Breast epithelium (tissue), 4 donors: ENCODE measurements at regions of chr7 and their contacts with region 1.

Region 1: DNA sequence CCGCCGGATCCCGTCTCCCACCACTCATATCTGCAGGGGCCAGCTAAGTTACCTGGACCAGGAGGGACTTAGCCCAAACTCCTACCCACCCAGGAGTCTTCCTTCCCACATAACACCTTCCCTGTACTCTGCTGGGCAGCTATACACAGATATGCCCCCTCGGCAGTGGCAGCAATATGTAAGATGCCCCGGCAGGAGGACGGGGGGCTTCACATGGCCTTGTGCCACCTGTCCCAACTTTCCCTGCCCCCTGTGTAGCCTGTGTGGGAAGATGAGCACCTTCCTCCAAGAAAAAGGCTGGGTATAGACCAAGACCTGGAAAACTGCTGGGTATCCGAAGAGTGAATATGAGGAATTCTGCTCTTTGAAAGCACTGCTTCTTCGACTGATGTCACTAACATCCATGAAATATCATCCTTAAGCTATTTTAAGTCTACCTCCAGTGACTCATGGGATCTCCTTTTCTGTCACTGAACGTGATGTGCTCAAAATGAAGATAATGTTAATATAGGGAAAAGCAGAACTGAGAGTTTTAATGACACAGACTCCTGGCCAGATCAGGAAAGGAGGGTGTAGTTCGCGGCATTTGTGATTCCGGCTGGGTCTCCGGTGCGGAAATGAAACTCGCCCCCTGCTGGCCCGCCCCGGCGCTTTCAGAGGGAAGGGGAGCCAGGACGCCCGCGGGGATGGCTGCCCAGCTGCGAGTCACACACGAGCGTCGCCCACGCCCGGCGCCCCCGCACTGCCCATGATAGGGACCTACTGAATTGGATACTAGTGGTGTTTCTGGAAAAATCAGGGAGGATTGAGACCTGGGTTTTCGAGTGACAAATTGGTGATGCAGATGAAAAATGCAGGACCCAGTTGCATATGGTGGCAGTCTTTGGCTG is 256.9 kb upstream of the NFE2L3 start:
- DNase-seq: peak; percentile 30 to 79
- H3K4me3 ChIP-seq: peak overlapping the region in 2 of 3 donors; percentile 27 to 57
- H3K27ac ChIP-seq: peak overlapping the region in 1 of 2 donors; percentile 1
- H3K4me1 ChIP-seq: peaks cover 0 to 5% of the 10 kb centered on the region in 2 donors
- H3K27me3 ChIP-seq: no peaks in the 10 kb centered on the region
- CTCF ChIP-seq: peak; percentile 53 to 68 (median 61)
- POLR2A ChIP-seq: no peak

Region 2: DNA sequence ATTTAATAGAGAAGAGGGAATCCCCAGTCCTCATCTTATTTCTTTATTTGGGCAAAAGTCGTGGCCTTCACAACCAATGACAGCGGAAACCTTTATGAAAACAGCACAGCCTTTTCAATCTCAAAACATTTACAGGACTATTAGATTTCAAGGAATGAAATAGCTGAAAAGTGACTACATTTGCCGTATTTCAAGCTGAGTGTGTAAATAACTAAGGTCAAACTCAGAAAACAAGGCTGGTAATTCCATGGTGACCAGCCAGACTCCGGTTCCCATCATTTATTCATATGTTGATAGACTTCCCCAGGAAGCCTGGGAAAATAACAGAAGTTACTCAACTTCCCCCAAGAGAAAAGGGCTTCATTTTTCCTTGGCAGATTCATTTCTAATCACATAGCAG is 200.4 kb before region 1 on chr7:
- intact Hi-C with region 1: no loop called
- DNase-seq: no peak
- H3K4me3 ChIP-seq: no peak overlapping the region
- H3K27ac ChIP-seq: no peak overlapping the region
- H3K4me1 ChIP-seq: no peaks in the 10 kb centered on the region
- H3K27me3 ChIP-seq: no peaks in the 10 kb centered on the region
- CTCF ChIP-seq: no peak
- POLR2A ChIP-seq: no peak

Region 3: DNA sequence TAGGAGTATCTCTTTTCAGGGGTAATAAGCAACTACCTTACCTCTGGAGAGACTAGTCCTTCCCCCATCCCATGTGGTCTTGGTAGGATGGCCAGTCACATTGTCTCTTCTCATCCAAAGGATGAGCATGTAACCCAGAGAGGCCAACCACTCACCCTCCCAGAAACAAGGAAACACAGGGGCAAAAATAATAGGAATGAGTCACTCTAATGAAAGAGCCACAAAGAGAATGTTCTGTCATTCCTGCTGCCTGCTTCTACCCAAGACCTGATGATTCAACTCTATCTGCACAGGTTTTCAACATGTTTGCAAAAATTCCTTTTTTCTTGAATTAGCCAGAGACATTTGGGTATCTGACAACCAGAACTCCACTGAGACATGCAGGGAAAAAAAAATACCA is 157.6 kb after region 1 on chr7:
- intact Hi-C with region 1: loop called (anchors 10 kb)
- DNase-seq: no peak
- H3K4me3 ChIP-seq: no peak overlapping the region
- H3K27ac ChIP-seq: no peak overlapping the region
- H3K4me1 ChIP-seq: no peaks in the 10 kb centered on the region
- H3K27me3 ChIP-seq: no peaks in the 10 kb centered on the region
- CTCF ChIP-seq: no peak
- POLR2A ChIP-seq: no peak

Region 4: GRCh38 chr7:26735976-26736600 is 840.9 kb after region 1 on chr7:
- intact Hi-C with region 1: no loop called
- DNase-seq: no peak
- H3K4me3 ChIP-seq: no peak overlapping the region
- H3K27ac ChIP-seq: no peak overlapping the region
- H3K4me1 ChIP-seq: no peaks in the 10 kb centered on the region
- H3K27me3 ChIP-seq: no peaks in the 10 kb centered on the region
- CTCF ChIP-seq: no peak
- POLR2A ChIP-seq: no peak

Region 5: DNA sequence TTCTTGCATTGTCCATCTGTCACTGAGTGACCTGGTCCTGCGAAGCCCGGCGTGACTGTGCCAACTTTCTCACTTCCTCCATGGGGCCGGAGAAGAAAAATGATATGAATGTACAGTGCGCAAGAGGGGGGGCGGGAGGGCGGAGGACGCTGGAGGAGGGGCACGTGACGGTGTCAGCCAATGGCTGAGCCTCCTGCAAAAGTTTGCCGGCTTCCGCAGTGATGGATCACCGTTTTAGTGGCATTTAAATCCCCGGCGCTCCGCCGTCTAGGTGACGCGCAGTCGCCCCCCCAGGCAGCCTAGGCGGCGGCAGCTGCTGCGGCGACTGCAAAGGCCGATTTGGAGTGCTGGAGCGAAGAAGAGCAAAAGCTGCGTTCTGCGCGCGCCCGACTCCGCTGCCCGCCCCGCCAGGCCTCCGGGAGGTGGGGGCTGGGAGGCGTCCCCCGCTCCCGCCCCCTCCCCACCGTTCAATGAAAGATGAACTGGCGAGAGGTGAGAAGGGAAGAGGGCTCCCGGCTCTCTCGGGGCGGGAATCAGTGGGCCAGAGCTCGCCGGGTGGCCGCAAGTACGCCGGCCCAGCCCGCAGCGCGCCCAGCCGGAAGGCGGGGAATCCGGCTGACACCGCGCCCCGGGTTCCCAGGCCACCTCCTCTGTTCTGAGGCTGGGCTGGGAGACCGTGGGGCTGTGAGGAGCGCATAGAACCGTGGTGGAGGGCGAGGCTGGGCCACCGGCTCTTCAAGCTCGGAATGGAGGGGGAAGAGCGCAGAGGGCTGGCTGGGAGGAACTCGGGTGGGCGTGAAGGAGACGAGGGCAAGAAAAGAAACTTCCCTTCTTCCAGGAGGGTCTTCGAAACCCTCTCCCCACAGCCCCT is 1201.0 kb after region 1 on chr7 and contains the start of gene HOXA1:
- intact Hi-C with region 1: no loop called
- DNase-seq: peak; percentile 63 to 87
- H3K4me3 ChIP-seq: peak within 1 kb of the TSS; percentile 83 to 99 (median 84)
- H3K27ac ChIP-seq: peak within 1 kb of the TSS; percentile 98 to 99
- H3K4me1 ChIP-seq: peaks cover 0 to 3% of the 10 kb centered on the region in 2 donors
- H3K27me3 ChIP-seq: no peaks in the 10 kb centered on the region
- CTCF ChIP-seq: no peak
- POLR2A ChIP-seq: peak; percentile 56
- total RNA-seq, gene HOXA1: 0.33 to 0.80 (median 0.44) TPM